Naive thymus-derived CD4-positive, alpha-beta T cell (primary cell): ENCODE measurements at regions of chr14 and their contacts with region 1.

Region 1: DNA sequence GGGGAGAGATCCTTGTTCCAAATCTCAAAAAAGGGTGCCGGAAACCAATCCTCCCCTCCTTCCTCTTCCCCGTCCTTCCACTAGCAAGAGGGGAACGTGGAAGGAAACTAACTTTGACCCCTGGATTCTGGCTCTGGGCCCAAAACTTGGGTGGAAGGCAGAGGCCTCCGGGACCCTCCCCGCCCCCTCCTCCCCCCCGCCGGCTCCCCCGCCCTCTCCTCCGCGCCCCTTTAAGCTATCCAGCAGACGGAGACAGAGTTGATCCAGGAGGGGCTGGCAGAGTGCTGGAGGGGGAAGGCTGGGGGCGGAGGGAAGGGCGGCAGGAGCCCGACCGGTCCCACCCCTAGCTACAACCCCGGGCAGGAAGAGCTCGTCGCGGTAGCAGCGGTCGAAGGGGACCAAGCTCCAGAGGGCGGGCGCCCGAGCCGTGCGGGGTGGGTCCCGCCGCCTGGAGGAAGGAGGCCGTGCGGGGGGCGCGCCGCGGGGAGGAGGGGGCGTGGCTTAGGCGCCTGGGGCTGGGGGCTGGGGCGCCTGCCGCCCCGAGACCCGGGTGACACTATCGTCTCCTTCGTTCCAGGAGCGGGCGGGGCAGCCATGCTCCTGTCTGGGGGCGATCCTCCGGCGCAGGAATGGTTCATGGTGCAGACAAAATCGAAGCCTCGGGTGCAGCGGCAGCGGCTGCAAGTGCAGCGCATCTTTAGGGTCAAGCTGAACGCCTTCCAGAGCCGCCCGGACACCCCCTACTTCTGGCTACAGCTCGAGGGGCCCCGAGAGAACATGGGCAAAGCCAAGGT is at the start of gene NYNRIN:
- DNase-seq: peak in 7 of 9 donors; percentile 17 to 46 (median 35)
- ATAC-seq: peak; percentile 78
- H3K4me3 ChIP-seq: peak within 1 kb of the TSS; percentile 37
- H3K4me3 Mint-ChIP-seq: peak within 1 kb of the TSS; percentile 71 to 84 (median 76)
- H3K27ac ChIP-seq: peak within 1 kb of the TSS; percentile 43
- H3K27ac Mint-ChIP-seq: peak within 1 kb of the TSS in 1 of 9 donors; percentile 90
- H3K4me1 ChIP-seq: peaks cover 0 to 5% of the 10 kb centered on the region in 2 donors
- H3K4me1 Mint-ChIP-seq: peaks cover 0 to 18% (median 15%) of the 10 kb centered on the region in 7 donors
- H3K27me3 ChIP-seq: no peaks in the 10 kb centered on the region
- H3K27me3 Mint-ChIP-seq: peaks cover 0 to 61% (median 8%) of the 10 kb centered on the region in 5 donors
- total RNA-seq, gene NYNRIN: 0.08 to 1.3 (median 0.11) TPM

Region 2: DNA sequence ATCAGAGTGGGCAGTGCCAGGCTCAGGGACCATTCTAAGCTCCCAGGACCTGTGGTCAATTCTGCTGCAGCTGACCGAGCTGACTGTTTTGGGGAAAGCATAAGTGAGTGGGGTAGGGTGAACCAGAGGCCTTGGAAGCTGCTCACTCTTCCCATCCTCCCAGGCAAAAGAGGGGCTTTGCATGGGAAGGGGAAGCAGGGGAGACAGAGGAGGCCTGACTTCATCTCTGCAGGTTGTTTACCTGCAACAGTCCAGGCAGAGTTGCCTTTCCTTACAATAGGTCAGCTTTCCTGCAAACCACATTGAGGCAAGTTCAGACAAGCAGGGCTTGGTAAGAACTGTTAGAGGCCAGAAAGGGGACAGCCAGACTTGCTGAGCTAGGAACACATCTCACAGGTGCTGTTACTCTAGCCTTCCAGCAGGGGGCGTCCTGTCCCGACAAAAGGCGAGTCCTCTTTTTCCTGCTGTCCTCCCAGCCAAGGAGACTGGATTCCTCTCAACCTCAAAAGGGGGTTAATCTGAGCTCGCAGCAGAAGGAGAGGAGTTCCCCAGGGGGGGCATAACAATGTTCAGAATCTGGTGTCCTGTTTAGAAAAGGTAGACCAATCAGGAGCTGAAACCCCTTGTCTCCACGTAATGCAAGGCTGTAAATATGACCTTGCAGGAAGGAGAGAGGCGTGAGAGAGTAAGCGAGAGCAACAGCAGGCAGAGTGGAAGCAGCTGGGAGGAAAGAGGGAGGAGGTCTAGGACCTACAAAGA is 767.0 kb before region 1 on chr14:
- CTCF ChIA-PET with region 1: no interaction called
- POLR2A ChIA-PET with region 1: no interaction called
- intact Hi-C with region 1: no loop called
- DNase-seq: peak; percentile 53 to 89 (median 76)
- ATAC-seq: peak; percentile 88
- H3K4me3 ChIP-seq: peak overlapping the region; percentile 16
- H3K4me3 Mint-ChIP-seq: peak overlapping the region; percentile 9 to 89 (median 77)
- H3K27ac ChIP-seq: peak overlapping the region; percentile 18
- H3K27ac Mint-ChIP-seq: peak overlapping the region in 8 of 9 donors; percentile 17 to 84 (median 60)
- H3K4me1 ChIP-seq: no peaks in the 10 kb centered on the region
- H3K4me1 Mint-ChIP-seq: peaks cover 5 to 18% (median 13%) of the 10 kb centered on the region in 7 donors
- H3K27me3 ChIP-seq: no peaks in the 10 kb centered on the region
- H3K27me3 Mint-ChIP-seq: peaks cover 0 to 2% (median 0%) of the 10 kb centered on the region in 5 donors

Region 3: DNA sequence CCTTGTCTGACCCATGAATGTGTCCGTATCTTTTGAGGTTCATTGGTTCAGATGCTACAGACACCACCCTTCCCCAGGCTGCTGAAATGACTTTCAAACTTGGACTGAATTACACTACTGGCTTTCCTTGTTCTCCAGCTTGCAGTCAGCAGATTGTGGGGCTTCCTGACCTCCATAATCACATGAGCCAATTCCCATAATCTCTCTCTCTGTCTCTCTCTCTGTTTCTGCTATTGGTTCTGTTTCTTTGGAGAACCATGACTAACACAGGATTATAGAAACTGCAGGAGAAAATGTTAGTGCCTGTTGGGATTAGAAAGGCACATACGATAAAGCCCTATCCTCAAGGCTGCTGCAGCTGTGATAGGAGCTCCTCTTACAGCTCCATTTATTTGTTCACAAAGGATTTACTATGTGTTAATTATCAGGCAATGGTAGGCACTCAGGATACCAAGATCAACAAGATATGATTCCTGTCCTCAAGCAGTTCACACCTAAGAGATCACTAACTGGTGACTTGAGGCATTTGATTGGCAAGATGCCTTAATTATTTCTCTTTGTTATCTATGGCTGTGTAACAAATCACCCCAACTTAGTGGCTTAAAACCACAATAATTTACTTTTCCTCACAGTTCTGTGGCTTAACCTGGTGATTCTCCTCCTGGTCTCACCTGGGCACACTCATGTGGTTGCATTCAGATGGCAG is 10.2 kb before region 1 on chr14:
- CTCF ChIA-PET with region 1: no interaction called
- POLR2A ChIA-PET with region 1: no interaction called
- intact Hi-C with region 1: no loop called
- DNase-seq: no peak
- ATAC-seq: no peak
- H3K4me3 ChIP-seq: no peak overlapping the region
- H3K4me3 Mint-ChIP-seq: no peak overlapping the region
- H3K27ac ChIP-seq: no peak overlapping the region
- H3K27ac Mint-ChIP-seq: no peak overlapping the region
- H3K4me1 ChIP-seq: no peaks in the 10 kb centered on the region
- H3K4me1 Mint-ChIP-seq: no peaks in the 10 kb centered on the region
- H3K27me3 ChIP-seq: no peaks in the 10 kb centered on the region
- H3K27me3 Mint-ChIP-seq: peaks cover 5 to 52% (median 19%) of the 10 kb centered on the region in 5 donors

Region 4: DNA sequence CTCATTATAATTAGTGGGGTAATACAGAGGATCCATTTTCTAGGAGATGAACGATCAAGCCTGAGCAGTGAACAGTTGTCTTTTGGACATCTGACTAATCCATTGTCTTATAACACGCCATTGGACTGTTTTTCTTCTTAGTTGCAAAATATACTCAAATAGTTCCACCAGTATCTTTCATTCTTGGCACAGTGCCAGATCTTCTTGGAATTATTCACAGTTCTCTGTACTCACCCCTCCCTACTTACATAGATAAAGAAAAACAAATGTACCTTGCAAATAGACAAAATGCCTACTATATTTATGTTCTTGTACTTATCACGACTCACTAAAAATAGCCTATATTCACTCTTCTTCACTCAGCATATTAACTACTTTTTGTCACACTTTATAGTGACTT is 26.9 kb after region 1 on chr14:
- CTCF ChIA-PET with region 1: no interaction called
- POLR2A ChIA-PET with region 1: interaction called, 4 read pairs
- intact Hi-C with region 1: loop called in 1 of 2 experiments (anchors 1 kb)
- DNase-seq: no peak
- ATAC-seq: no peak
- H3K4me3 ChIP-seq: no peak overlapping the region
- H3K4me3 Mint-ChIP-seq: peak overlapping the region in 3 of 10 donors; percentile 14 to 42 (median 35)
- H3K27ac ChIP-seq: no peak overlapping the region
- H3K27ac Mint-ChIP-seq: peak overlapping the region in 4 of 9 donors; percentile 2 to 27 (median 16)
- H3K4me1 ChIP-seq: peaks cover 16 to 34% of the 10 kb centered on the region in 2 donors
- H3K4me1 Mint-ChIP-seq: peaks cover 12 to 44% (median 35%) of the 10 kb centered on the region in 7 donors
- H3K27me3 ChIP-seq: no peaks in the 10 kb centered on the region
- H3K27me3 Mint-ChIP-seq: no peaks in the 10 kb centered on the region